ENCODE measurements at regions of chr18 and their contacts with region 1.

Region 1: GRCh38 chr18:33440060-33441043 is at the start of gene CCDC178:
- DNase-seq: peak; percentile 51
- ATAC-seq: peak; percentile 91 to 94
- total RNA-seq, gene CCDC178: 0.89 to 1.4 TPM

Region 2: GRCh38 chr18:33751613-33752221 is 311.4 kb after region 1 on chr18:
- intact Hi-C with region 1: loop called in 1 of 2 experiments (anchors 10 kb)
- DNase-seq: no peak
- ATAC-seq: no peak